HepG2 (cell line): ENCODE measurements at regions of chr7 and their contacts with region 1.

Region 1: GRCh38 chr7:109844362-109844761 is 1246.6 kb upstream of the LRRN3 start:
- DNase-seq: peak; percentile 5
- ATAC-seq: no peak
- H3K4me3 ChIP-seq: no peak overlapping the region
- H3K27ac ChIP-seq: no peak overlapping the region
- H3K4me1 ChIP-seq: no peaks in the 10 kb centered on the region
- H3K27me3 ChIP-seq: no peaks in the 10 kb centered on the region
- CTCF ChIP-seq: peak; percentile 46
- EP300 ChIP-seq: no peak
- POLR2A ChIP-seq: no peak
- RAD21 ChIP-seq: no peak

Region 2: GRCh38 chr7:109663806-109664205 is 180.6 kb before region 1 on chr7:
- CTCF ChIA-PET with region 1: no interaction called
- POLR2A ChIA-PET with region 1: no interaction called
- in situ Hi-C with region 1: no loop called
- intact Hi-C with region 1: no loop called
- DNase-seq: no peak
- ATAC-seq: no peak
- H3K4me3 ChIP-seq: no peak overlapping the region
- H3K27ac ChIP-seq: no peak overlapping the region
- H3K4me1 ChIP-seq: no peaks in the 10 kb centered on the region
- H3K27me3 ChIP-seq: no peaks in the 10 kb centered on the region
- CTCF ChIP-seq: no peak
- EP300 ChIP-seq: no peak
- POLR2A ChIP-seq: no peak
- RAD21 ChIP-seq: no peak

Region 3: GRCh38 chr7:110204527-110204926 is 360.2 kb after region 1 on chr7:
- CTCF ChIA-PET with region 1: no interaction called
- POLR2A ChIA-PET with region 1: no interaction called
- in situ Hi-C with region 1: no loop called
- intact Hi-C with region 1: loop called (anchors 5 kb)
- DNase-seq: no peak
- ATAC-seq: peak; percentile 89
- H3K4me3 ChIP-seq: no peak overlapping the region
- H3K27ac ChIP-seq: no peak overlapping the region
- H3K4me1 ChIP-seq: no peaks in the 10 kb centered on the region
- H3K27me3 ChIP-seq: no peaks in the 10 kb centered on the region
- CTCF ChIP-seq: peak; percentile 50
- EP300 ChIP-seq: no peak
- POLR2A ChIP-seq: no peak
- RAD21 ChIP-seq: no peak

Region 4: GRCh38 chr7:110442381-110442837 is 598.0 kb after region 1 on chr7:
- CTCF ChIA-PET with region 1: interaction called, 4 read pairs
- POLR2A ChIA-PET with region 1: no interaction called
- in situ Hi-C with region 1: loop called (anchors 25 kb)
- intact Hi-C with region 1: loop called (anchors 1 kb)
- DNase-seq: peak; percentile 49
- ATAC-seq: peak; percentile 99
- H3K4me3 ChIP-seq: no peak overlapping the region
- H3K27ac ChIP-seq: no peak overlapping the region
- H3K4me1 ChIP-seq: no peaks in the 10 kb centered on the region
- H3K27me3 ChIP-seq: no peaks in the 10 kb centered on the region
- CTCF ChIP-seq: peak; percentile 80
- EP300 ChIP-seq: no peak
- POLR2A ChIP-seq: no peak
- RAD21 ChIP-seq: peak; percentile 50; the same call in 1 of the 2 replicates